B cell (primary cell): ENCODE measurements at regions of chr1 and their contacts with region 1.

Region 1: DNA sequence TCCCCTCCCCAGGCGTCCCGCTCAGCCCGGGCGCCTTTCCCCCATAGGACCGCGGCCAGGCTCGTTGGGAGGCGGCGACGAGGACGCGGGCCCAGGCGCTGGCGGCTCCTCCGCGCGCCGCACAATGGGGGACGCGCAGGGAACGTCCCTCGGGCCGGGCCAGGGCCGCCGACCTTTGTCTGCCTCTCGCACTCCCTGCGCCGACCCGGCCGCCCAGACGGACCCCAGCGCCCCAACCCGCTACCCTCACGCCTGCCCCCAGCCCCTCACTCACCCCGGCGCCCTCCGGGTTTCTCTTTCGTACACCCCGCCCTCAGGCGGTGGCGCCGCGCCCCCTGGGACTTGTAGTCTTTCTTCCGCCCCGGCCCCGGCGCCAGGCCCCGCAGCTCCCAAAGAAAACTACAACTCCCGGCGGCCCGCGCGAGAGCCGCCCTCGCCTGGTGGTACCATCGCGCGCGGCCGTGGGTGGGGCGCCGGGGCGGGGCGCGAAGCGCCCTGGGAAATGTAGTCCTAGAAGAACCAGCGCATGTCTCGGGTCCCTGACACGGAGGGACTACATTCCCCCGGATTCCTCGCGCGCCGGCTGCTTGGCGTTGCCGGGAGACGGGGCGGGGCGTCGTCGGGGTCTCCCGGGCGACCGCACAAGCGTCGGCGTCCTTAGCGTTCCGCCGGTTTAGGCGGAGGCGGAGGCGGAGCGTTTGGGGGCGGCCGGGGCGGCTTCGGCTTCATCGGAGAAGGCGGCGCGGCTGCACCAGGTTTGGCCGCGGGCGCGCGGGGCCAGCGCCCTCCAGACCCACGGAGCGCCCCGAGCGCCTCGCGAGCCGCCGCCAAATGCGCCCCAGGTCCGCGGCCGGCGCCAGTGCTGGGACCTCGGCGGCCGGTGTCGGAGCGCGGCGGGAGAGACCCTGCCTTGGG is at the start of gene C1orf159:
- DNase-seq: peak; percentile 98
- ATAC-seq: peak; percentile 92
- H3K4me3 ChIP-seq: peak within 1 kb of the TSS; percentile 23 to 80 (median 68)
- H3K4me3 Mint-ChIP-seq: peak within 1 kb of the TSS; percentile 88
- H3K27ac ChIP-seq: peak within 1 kb of the TSS in 1 of 2 donors; percentile 76
- H3K27ac Mint-ChIP-seq: peak within 1 kb of the TSS; percentile 88
- H3K4me1 ChIP-seq: peaks cover 10 to 16% of the 10 kb centered on the region in 2 donors
- H3K4me1 Mint-ChIP-seq: peaks cover 16% of the 10 kb centered on the region
- H3K27me3 ChIP-seq: peaks cover 0 to 29% (median 3%) of the 10 kb centered on the region in 4 experiments
- H3K27me3 Mint-ChIP-seq: peaks cover 9% of the 10 kb centered on the region
- CTCF ChIP-seq: no peak
- total RNA-seq, gene C1orf159: 23.0 and 25.3 TPM in 2 replicates

Region 2: GRCh38 chr1:1019122-1019999 is 96.7 kb before region 1 on chr1:
- CTCF ChIA-PET with region 1: no interaction called
- POLR2A ChIA-PET with region 1: interaction called, 4 read pairs
- intact Hi-C with region 1: loop called (anchors 1 kb)
- DNase-seq: peak; percentile 89
- ATAC-seq: peak; percentile 91
- H3K4me3 ChIP-seq: peak overlapping the region in 4 of 5 experiments; percentile 13 to 53 (median 44)
- H3K4me3 Mint-ChIP-seq: peak overlapping the region; percentile 73
- H3K27ac ChIP-seq: no peak overlapping the region
- H3K27ac Mint-ChIP-seq: peak overlapping the region; percentile 67
- H3K4me1 ChIP-seq: peaks cover 10 to 28% of the 10 kb centered on the region in 2 donors
- H3K4me1 Mint-ChIP-seq: peaks cover 9% of the 10 kb centered on the region
- H3K27me3 ChIP-seq: peaks cover 0 to 20% (median 6%) of the 10 kb centered on the region in 4 experiments
- H3K27me3 Mint-ChIP-seq: no peaks in the 10 kb centered on the region
- CTCF ChIP-seq: peak; percentile 47

Region 3: DNA sequence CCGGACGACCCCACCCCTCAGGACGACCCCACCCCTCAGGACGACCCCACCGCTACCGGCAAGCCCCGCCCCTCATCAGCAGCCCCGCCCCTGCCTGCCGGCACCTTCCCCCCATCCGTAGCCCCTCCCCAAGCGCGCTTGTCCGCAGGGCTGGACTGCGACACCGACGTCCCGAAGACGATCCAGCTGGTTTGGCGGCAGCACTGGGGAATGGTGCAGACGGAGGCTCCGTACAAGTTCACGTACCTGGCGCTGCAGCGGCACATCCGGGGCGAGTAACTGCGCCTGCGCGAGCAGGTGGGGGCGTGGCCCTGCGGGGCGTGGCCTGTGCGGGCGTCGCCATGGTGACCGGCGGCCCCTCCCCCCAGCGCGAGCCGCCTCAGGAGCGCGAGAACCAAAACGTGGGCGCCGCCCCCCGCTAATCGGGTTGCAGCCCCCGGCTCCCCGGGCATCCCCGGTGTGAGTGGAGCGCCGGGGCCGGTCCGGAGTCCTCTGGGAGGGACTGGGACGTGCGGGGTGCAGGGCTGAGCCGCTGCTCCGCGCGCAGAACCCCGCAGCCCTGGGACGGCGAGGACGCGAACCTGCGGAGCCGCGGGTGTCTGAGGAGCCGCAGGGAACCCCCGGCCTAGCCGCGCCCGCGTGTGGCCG is 46.9 kb before region 1 on chr1:
- CTCF ChIA-PET with region 1: no interaction called
- POLR2A ChIA-PET with region 1: interaction called, 3 read pairs
- intact Hi-C with region 1: loop called (anchors 1 kb)
- DNase-seq: peak; percentile 96
- ATAC-seq: peak; percentile 50
- H3K4me3 ChIP-seq: peak overlapping the region in 4 of 5 experiments; percentile 56 to 71 (median 67)
- H3K4me3 Mint-ChIP-seq: peak overlapping the region; percentile 86
- H3K27ac ChIP-seq: peak overlapping the region; percentile 73 to 77
- H3K27ac Mint-ChIP-seq: peak overlapping the region; percentile 92
- H3K4me1 ChIP-seq: peaks cover 28 to 31% of the 10 kb centered on the region in 2 donors
- H3K4me1 Mint-ChIP-seq: peaks cover 25% of the 10 kb centered on the region
- H3K27me3 ChIP-seq: peaks cover 0 to 11% (median 2%) of the 10 kb centered on the region in 4 experiments
- H3K27me3 Mint-ChIP-seq: no peaks in the 10 kb centered on the region
- CTCF ChIP-seq: no peak

Region 4: GRCh38 chr1:1231400-1232223 is 115.6 kb after region 1 on chr1 and contains the start of gene SDF4:
- CTCF ChIA-PET with region 1: interaction called, 18 read pairs
- POLR2A ChIA-PET with region 1: interaction called, 3 read pairs
- intact Hi-C with region 1: loop called (anchors 1 kb)
- DNase-seq: peak; percentile 98
- ATAC-seq: peak; percentile 94
- H3K4me3 ChIP-seq: peak within 1 kb of the TSS; percentile 86 to 98 (median 90)
- H3K4me3 Mint-ChIP-seq: peak within 1 kb of the TSS; percentile 93
- H3K27ac ChIP-seq: peak within 1 kb of the TSS; percentile 29 to 91
- H3K27ac Mint-ChIP-seq: peak within 1 kb of the TSS; percentile 84
- H3K4me1 ChIP-seq: peaks cover 25 to 30% of the 10 kb centered on the region in 2 donors
- H3K4me1 Mint-ChIP-seq: peaks cover 33% of the 10 kb centered on the region
- H3K27me3 ChIP-seq: no peaks in the 10 kb centered on the region
- H3K27me3 Mint-ChIP-seq: no peaks in the 10 kb centered on the region
- CTCF ChIP-seq: no peak
- total RNA-seq, gene SDF4: 143 and 151 TPM in 2 replicates

Region 5: GRCh38 chr1:1307908-1308755 is 192.1 kb after region 1 on chr1 and contains the starts of genes ACAP3 and PUSL1:
- CTCF ChIA-PET with region 1: interaction called, 5 read pairs
- POLR2A ChIA-PET with region 1: no interaction called
- intact Hi-C with region 1: loop called (anchors 1 kb)
- DNase-seq: peak; percentile 95
- ATAC-seq: peak; percentile 62
- H3K4me3 ChIP-seq: peak within 1 kb of the TSS; percentile 31 to 92 (median 82)
- H3K4me3 Mint-ChIP-seq: peak within 1 kb of the TSS; percentile 90
- H3K27ac ChIP-seq: peak within 1 kb of the TSS; percentile 84 to 89
- H3K27ac Mint-ChIP-seq: peak within 1 kb of the TSS; percentile 95
- H3K4me1 ChIP-seq: peaks cover 34 to 47% of the 10 kb centered on the region in 2 donors
- H3K4me1 Mint-ChIP-seq: peaks cover 33% of the 10 kb centered on the region
- H3K27me3 ChIP-seq: no peaks in the 10 kb centered on the region
- H3K27me3 Mint-ChIP-seq: no peaks in the 10 kb centered on the region
- CTCF ChIP-seq: no peak
- total RNA-seq, gene ACAP3: 40.7 and 49.1 TPM in 2 replicates
- total RNA-seq, gene PUSL1: 15.7 and 17.9 TPM in 2 replicates

Region 6: GRCh38 chr1:1374929-1375662 is 259.1 kb after region 1 on chr1 and contains the start of gene AURKAIP1:
- CTCF ChIA-PET with region 1: no interaction called
- POLR2A ChIA-PET with region 1: interaction called, 3 read pairs
- intact Hi-C with region 1: loop called (anchors 1 kb)
- DNase-seq: peak; percentile 100
- ATAC-seq: peak; percentile 89
- H3K4me3 ChIP-seq: peak within 1 kb of the TSS; percentile 61 to 93 (median 78)
- H3K4me3 Mint-ChIP-seq: peak within 1 kb of the TSS; percentile 84
- H3K27ac ChIP-seq: peak within 1 kb of the TSS; percentile 75 to 95
- H3K27ac Mint-ChIP-seq: peak within 1 kb of the TSS; percentile 89
- H3K4me1 ChIP-seq: peaks cover 19 to 37% of the 10 kb centered on the region in 2 donors
- H3K4me1 Mint-ChIP-seq: peaks cover 11% of the 10 kb centered on the region
- H3K27me3 ChIP-seq: no peaks in the 10 kb centered on the region
- H3K27me3 Mint-ChIP-seq: no peaks in the 10 kb centered on the region
- CTCF ChIP-seq: peak; percentile 39
- total RNA-seq, gene AURKAIP1: 61.7 and 67.0 TPM in 2 replicates